ENCODE measurements at regions of chr17 and their contacts with region 1.

Region 1: DNA sequence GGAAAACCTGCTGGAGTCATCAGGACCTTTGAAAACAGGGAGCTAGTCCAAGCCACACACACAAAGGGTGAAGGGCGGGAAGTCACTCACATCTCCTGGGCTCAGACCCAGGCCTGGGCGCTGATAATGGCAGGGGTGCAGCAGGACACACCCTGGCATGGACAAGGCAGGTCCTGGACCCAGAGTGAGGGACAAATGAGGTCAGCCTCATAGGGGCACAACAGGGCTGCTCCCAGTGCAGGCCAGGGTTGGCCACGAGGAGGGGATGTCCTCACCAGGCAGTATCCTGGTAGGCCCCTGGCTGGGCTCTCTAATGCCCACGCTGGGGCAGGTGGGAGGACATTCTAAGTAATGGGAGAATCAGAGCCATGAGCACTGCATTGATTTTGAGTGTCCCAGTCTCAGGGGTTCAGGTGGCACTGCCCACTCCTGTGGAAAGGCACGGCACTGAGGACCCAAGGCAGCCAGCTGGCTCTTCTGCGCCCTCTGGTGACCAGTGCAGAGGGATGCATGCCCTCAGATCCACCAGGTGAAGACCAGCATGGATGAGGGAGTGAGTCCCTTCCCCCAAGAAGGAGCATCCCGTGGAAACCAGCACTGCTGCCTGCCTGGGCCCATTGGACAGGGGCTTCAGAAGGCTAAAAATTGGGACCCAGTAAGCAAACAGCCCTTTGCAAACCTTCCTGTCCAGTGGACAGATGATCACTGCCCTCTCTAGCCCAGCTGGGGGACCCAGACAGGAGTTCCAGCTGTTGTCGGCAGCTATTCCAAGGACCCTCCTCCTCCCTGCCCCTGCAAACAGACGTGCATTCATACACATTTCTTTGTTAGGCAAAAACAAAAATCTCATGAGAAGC is 23.4 kb upstream of the SREBF1 start:
- DNase-seq: peak; percentile 48 to 77
- H3K4me3 ChIP-seq: no peak overlapping the region
- H3K4me1 ChIP-seq: no peaks in the 10 kb centered on the region; the same call in 1 of the 2 replicates
- H3K27me3 ChIP-seq: no peaks in the 10 kb centered on the region

Region 2: GRCh38 chr17:17675925-17676534 is 184.1 kb before region 1 on chr17:
- in situ Hi-C with region 1: loop called (anchors 5 kb)
- DNase-seq: no peak
- H3K4me3 ChIP-seq: no peak overlapping the region
- H3K4me1 ChIP-seq: peaks cover 8% of the 10 kb centered on the region
- H3K27me3 ChIP-seq: no peaks in the 10 kb centered on the region

Region 3: DNA sequence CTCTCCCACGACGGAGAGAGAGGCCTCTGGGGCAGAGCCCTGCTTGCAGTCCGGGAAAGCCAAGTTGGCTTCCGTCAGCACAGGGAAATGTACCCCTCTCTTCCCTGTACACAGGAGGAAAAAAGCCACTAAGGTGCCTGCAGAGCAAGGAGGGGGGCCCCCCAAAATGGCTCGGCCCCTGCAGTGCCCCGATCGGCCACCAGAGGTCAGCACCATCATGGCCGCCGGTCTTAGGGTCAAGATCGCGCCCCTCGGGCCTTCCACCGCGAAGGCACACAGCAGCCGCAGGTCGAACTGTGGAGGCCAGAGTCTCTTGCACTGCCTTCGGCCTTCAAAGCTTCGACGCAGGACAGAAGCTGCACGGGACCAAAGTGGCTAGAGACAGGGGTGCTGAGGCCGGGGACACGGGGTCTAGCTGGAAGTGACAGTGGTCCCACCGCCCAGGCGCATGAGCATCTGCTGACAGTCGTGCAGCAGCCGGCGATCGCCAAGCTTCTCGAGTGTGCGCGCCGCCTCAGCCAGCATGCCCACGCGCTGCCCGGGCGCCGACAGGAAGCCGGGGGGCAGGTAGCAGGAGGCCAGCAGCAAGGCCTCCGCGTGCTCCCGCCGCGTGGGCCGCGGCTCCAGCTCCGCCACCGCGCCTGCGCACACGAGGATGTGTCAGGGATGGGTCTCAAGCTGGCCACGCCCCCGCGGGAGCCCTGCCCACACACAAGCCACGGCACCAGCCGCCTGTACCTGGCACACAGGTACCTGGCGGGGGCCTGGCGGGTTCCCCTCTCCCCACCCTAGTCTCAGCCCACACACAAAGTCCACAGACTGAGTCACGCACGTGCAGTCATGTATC is 47.7 kb before region 1 on chr17:
- in situ Hi-C with region 1: loop called (anchors 5 kb)
- DNase-seq: peak; percentile 16 to 81
- H3K4me3 ChIP-seq: no peak overlapping the region
- H3K4me1 ChIP-seq: peaks cover 9% of the 10 kb centered on the region
- H3K27me3 ChIP-seq: no peaks in the 10 kb centered on the region

Measured in HAP-1 (cell line).